WTC11 (cell line): ENCODE measurements at regions of chr10 and their contacts with region 1.

Region 1: GRCh38 chr10:100518761-100519241 is 860 bp downstream of the SEC31B start:
- DNase-seq: peak; percentile 69
- ATAC-seq: peak; percentile 36
- H3K4me3 Mint-ChIP-seq: peak overlapping the region; percentile 91
- H3K27ac Mint-ChIP-seq: no peak overlapping the region
- H3K4me1 Mint-ChIP-seq: 0 out of 2 replicates have a peak, but pooled peaks cover 8% of the 10 kb centered on the region
- H3K27me3 Mint-ChIP-seq: peaks cover 42% of the 10 kb centered on the region
- CTCF ChIP-seq: peak; percentile 56; the same call in 1 of the 2 replicates

Region 2: GRCh38 chr10:100346765-100347567 is 171.8 kb before region 1 on chr10 and contains the start of gene SCD:
- CTCF ChIA-PET with region 1: interaction called, 27 read pairs
- POLR2A ChIA-PET with region 1: no interaction called
- DNase-seq: peak; percentile 89
- ATAC-seq: peak; percentile 84
- H3K4me3 Mint-ChIP-seq: peak within 1 kb of the TSS; percentile 96
- H3K27ac Mint-ChIP-seq: peak within 1 kb of the TSS; percentile 98
- H3K4me1 Mint-ChIP-seq: peaks cover 62% of the 10 kb centered on the region
- H3K27me3 Mint-ChIP-seq: no peaks in the 10 kb centered on the region
- CTCF ChIP-seq: no peak
- total RNA-seq, gene SCD: 490 to 556 TPM (median 501 TPM) in 3 replicates

Region 3: DNA sequence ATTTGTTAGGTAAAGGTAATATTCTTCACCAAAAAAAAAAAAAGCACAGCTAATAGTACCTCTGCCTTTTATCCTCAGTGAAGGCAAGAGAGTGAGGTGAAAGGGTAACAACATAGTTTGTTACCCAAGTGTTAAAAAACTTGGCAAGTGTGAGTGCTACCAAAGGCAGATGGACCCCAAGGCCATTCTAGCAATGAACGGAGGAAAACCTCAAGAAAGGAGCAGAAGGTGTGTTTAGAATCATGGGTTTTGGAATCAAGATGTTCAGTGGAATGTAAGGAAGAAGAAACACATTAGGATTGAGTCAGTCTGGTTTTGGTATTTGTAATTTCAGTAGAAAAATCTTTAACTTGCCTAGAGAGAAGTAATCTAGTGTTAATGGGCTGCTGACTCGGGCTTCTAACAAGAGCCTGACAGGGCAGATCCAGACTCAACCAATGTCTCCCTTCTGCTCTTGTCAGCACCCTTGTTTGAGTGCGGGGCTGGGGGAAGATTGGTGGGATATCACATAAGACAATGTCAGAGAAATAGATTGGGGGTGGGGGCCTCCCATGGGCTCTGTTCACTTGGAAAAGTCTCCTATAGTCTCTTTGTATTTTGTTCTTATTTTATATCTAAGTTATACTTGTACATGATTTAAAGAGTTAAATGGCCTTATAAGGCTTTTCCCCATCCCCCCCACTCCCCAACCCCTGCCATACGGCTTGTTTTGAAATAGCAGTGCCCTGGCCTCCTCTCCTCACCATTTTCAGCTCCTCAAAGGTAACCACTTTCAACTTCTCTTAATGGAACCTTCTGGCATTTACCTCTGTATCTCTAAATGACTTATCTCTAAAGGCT is 127.4 kb before region 1 on chr10:
- CTCF ChIA-PET with region 1: no interaction called
- POLR2A ChIA-PET with region 1: no interaction called
- DNase-seq: no peak
- ATAC-seq: no peak
- H3K4me3 Mint-ChIP-seq: no peak overlapping the region
- H3K27ac Mint-ChIP-seq: no peak overlapping the region
- H3K4me1 Mint-ChIP-seq: no peaks in the 10 kb centered on the region
- H3K27me3 Mint-ChIP-seq: peaks cover 3% of the 10 kb centered on the region
- CTCF ChIP-seq: no peak

Region 4: GRCh38 chr10:100433253-100434240 is 85.3 kb before region 1 on chr10:
- CTCF ChIA-PET with region 1: interaction called, 72 read pairs
- POLR2A ChIA-PET with region 1: no interaction called
- DNase-seq: peak; percentile 98
- ATAC-seq: peak; percentile 99
- H3K4me3 Mint-ChIP-seq: no peak overlapping the region
- H3K27ac Mint-ChIP-seq: no peak overlapping the region; the same call in 1 of the 2 replicates
- H3K4me1 Mint-ChIP-seq: peaks cover 6% of the 10 kb centered on the region
- H3K27me3 Mint-ChIP-seq: no peaks in the 10 kb centered on the region; the same call in 1 of the 2 replicates
- CTCF ChIP-seq: peak; percentile 99

Region 5: DNA sequence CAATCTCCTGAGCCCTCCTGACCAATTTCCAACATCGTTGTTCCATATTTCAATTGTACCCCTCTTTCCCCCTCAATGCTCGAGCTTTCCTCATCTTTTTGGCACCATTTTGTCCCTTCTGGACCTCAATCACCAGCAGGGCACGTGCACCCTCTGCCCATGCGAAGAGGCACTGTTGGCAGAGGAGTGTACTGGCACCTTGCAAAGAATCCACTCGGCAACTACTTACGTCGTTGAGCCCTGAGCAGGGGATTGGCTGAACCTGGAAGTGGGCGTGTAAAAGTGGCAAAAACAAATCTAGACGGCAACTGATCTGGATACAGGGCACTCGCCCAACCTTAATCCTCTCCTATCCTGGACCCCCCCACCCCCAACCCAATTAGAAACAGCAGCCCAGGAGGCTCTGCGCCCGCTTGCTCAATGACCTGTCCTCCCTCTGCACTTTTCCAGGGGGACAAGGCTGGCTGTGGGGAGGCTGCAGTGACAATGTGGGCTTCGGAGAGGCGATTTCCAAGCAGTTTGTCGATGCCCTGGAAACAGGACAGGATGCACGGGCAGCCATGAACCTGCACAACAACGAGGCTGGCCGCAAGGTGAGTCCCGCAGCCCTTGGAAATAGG is 37.2 kb before region 1 on chr10:
- CTCF ChIA-PET with region 1: interaction called, 134 read pairs
- POLR2A ChIA-PET with region 1: no interaction called
- DNase-seq: peak; percentile 89
- ATAC-seq: peak; percentile 76
- H3K4me3 Mint-ChIP-seq: peak overlapping the region; percentile 75
- H3K27ac Mint-ChIP-seq: no peak overlapping the region
- H3K4me1 Mint-ChIP-seq: peaks cover 40% of the 10 kb centered on the region
- H3K27me3 Mint-ChIP-seq: peaks cover 94% of the 10 kb centered on the region
- CTCF ChIP-seq: no peak

Region 6: DNA sequence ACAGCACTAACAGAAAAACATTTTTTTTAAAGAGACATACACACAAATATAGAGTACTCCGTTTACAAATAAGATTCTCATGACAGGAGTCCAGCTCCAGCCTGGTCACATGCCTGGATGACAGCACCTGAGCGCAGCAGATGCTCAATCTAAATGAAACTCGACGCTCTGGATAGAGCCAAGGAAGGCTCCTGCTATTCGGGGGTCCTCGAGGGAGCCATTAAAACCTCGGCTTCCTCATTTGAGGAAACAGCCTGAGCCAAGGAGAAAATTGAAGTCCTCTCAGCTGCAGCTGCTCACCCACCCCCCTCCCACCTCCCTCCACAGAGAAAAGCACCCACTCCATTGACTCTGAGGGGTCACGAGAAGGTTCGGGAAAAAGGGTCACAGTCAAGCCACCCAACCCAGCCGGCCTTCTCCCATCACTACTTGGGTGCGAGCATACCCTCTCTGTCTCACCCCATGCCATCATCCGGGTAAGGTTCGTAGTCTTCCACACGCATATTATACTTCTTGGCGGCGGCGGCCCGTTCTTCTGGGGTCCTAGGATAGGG is 10.2 kb after region 1 on chr10:
- CTCF ChIA-PET with region 1: interaction called, 71 read pairs
- POLR2A ChIA-PET with region 1: no interaction called
- DNase-seq: no peak
- ATAC-seq: no peak
- H3K4me3 Mint-ChIP-seq: peak overlapping the region; percentile 99
- H3K27ac Mint-ChIP-seq: no peak overlapping the region
- H3K4me1 Mint-ChIP-seq: peaks cover 13% of the 10 kb centered on the region
- H3K27me3 Mint-ChIP-seq: no peaks in the 10 kb centered on the region
- CTCF ChIP-seq: no peak

Region 7: DNA sequence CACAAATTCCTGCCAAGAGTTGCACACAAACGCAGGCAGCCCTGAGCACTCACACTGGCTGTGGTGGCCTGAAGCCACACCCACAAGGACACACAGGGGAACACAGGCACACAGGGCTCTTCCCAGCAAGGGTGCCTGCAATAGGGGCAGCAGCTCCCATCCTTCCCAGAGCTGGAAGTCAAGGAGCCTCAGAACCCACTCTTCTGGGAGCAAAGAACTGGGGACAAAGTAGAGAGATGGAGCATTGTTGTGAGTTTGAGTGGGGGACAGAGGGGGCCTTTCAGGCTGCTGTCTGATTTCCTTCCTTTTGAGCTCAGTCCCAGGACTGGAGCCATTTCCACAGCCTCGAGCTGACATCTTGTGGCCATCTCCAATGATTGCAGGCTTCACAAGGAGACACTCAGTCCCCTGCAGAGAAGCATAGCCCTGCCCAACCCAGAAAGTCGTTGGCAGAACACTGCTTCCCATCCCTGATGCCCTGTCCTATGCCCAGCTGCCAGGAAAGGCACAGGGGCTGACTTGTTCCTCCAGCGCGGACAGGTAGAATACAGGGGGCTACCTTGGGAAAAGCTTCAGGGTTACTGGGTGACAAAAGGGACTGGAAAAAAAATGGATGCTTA is 359.6 kb after region 1 on chr10:
- CTCF ChIA-PET with region 1: interaction called, 29 read pairs
- POLR2A ChIA-PET with region 1: no interaction called
- DNase-seq: peak; percentile 75
- ATAC-seq: peak; percentile 86
- H3K4me3 Mint-ChIP-seq: no peak overlapping the region
- H3K27ac Mint-ChIP-seq: no peak overlapping the region
- H3K4me1 Mint-ChIP-seq: peaks cover 31% of the 10 kb centered on the region
- H3K27me3 Mint-ChIP-seq: peaks cover 28% of the 10 kb centered on the region
- CTCF ChIP-seq: peak; percentile 30